Transverse colon (tissue), 4 donors: ENCODE measurements at regions of chr3 and their contacts with region 1.

Region 1: GRCh38 chr3:42572278-42572677 is 9.5 kb downstream of the SEC22C start:
- DNase-seq: peak; percentile 30
- H3K4me3 ChIP-seq: no peak overlapping the region
- H3K27ac ChIP-seq: no peak overlapping the region
- H3K4me1 ChIP-seq: no peaks in the 10 kb centered on the region
- H3K27me3 ChIP-seq: no peaks in the 10 kb centered on the region
- CTCF ChIP-seq: peak in 2 of 5 experiments; percentile 11 to 25
- EP300 ChIP-seq: no peak
- POLR2A ChIP-seq: no peak

Region 2: GRCh38 chr3:42061713-42062408 is 510.4 kb before region 1 on chr3:
- in situ Hi-C with region 1: no loop called
- intact Hi-C with region 1: no loop called
- DNase-seq: peak; percentile 72
- H3K4me3 ChIP-seq: no peak overlapping the region
- H3K27ac ChIP-seq: peak overlapping the region; percentile 65 to 81 (median 76)
- H3K4me1 ChIP-seq: peaks cover 20 to 77% (median 52%) of the 10 kb centered on the region in 4 donors
- H3K27me3 ChIP-seq: no peaks in the 10 kb centered on the region
- CTCF ChIP-seq: no peak
- EP300 ChIP-seq: no peak
- POLR2A ChIP-seq: no peak

Region 3: DNA sequence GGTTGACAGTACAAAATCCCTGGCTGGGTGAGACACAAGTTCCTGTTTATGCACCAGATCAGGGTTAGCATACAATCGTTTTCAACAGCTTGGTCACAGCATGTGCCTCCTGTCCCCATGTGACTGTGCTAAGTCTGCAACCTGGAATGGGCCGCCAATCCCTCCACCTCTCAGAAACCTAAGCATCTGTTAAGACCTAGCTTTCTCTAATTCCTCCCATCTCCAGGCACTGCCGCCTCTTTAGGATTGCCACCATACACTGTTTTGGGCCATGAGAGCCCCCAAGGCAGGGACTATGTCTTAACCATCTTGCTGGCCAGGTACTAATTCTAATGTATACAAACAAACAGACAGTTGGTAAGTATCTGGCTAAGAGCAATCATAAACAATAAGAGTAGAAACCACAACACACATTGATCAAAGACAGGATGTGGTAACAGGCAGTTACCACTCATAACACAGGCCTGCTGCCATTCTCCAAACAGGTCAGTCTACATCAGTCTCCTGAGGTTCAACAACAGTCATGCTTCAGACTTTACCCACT is 16.1 kb before region 1 on chr3:
- in situ Hi-C with region 1: no loop called
- intact Hi-C with region 1: loop called (anchors 1 kb)
- DNase-seq: no peak
- H3K4me3 ChIP-seq: no peak overlapping the region
- H3K27ac ChIP-seq: no peak overlapping the region
- H3K4me1 ChIP-seq: no peaks in the 10 kb centered on the region
- H3K27me3 ChIP-seq: no peaks in the 10 kb centered on the region
- CTCF ChIP-seq: no peak
- EP300 ChIP-seq: no peak
- POLR2A ChIP-seq: no peak